T-cell (primary cell): ENCODE measurements at regions of chr12 and their contacts with region 1.

Region 1: GRCh38 chr12:52069327-52070184 is at the start of gene ATG101:
- DNase-seq: peak; percentile 76 to 93 (median 81)
- ATAC-seq: peak; percentile 92 to 97 (median 96)
- H3K4me3 ChIP-seq: peak within 1 kb of the TSS; percentile 93 to 99
- H3K4me3 Mint-ChIP-seq: peak within 1 kb of the TSS; percentile 91 to 98 (median 98)
- H3K27ac ChIP-seq: peak within 1 kb of the TSS; percentile 91
- H3K27ac Mint-ChIP-seq: peak within 1 kb of the TSS; percentile 98 to 99
- H3K4me1 ChIP-seq: peaks cover 20 to 38% of the 10 kb centered on the region in 2 experiments
- H3K4me1 Mint-ChIP-seq: peaks cover 42 to 47% (median 46%) of the 10 kb centered on the region in 3 donors
- H3K27me3 ChIP-seq: no peaks in the 10 kb centered on the region
- H3K27me3 Mint-ChIP-seq: peaks cover 0 to 7% of the 10 kb centered on the region in 2 donors
- total RNA-seq, gene ATG101: 24.8 to 30.3 (median 25.9) TPM

Region 2: GRCh38 chr12:51622564-51622963 is 447.0 kb before region 1 on chr12:
- CTCF ChIA-PET with region 1: no interaction called
- POLR2A ChIA-PET with region 1: no interaction called
- DNase-seq: no peak
- ATAC-seq: no peak
- H3K4me3 ChIP-seq: no peak overlapping the region
- H3K4me3 Mint-ChIP-seq: no peak overlapping the region
- H3K27ac ChIP-seq: no peak overlapping the region
- H3K27ac Mint-ChIP-seq: no peak overlapping the region
- H3K4me1 ChIP-seq: no peaks in the 10 kb centered on the region
- H3K4me1 Mint-ChIP-seq: no peaks in the 10 kb centered on the region
- H3K27me3 ChIP-seq: peaks cover 0 to 2% of the 10 kb centered on the region in 2 experiments
- H3K27me3 Mint-ChIP-seq: peaks cover 12 to 19% of the 10 kb centered on the region in 2 donors

Region 3: GRCh38 chr12:52082988-52083637 is 13.6 kb after region 1 on chr12:
- CTCF ChIA-PET with region 1: interaction called, 4 to 13 read pairs
- POLR2A ChIA-PET with region 1: no interaction called
- DNase-seq: peak; percentile 31 to 82 (median 56)
- ATAC-seq: peak; percentile 74 to 79 (median 76)
- H3K4me3 ChIP-seq: no peak overlapping the region
- H3K4me3 Mint-ChIP-seq: no peak overlapping the region
- H3K27ac ChIP-seq: no peak overlapping the region
- H3K27ac Mint-ChIP-seq: peak overlapping the region in 1 of 2 donors; percentile 30
- H3K4me1 ChIP-seq: peaks cover 6 to 28% of the 10 kb centered on the region in 2 experiments
- H3K4me1 Mint-ChIP-seq: peaks cover 12 to 15% (median 13%) of the 10 kb centered on the region in 3 donors
- H3K27me3 ChIP-seq: peaks cover 0 to 21% of the 10 kb centered on the region in 2 experiments
- H3K27me3 Mint-ChIP-seq: peaks cover 11 to 16% of the 10 kb centered on the region in 2 donors

Region 4: DNA sequence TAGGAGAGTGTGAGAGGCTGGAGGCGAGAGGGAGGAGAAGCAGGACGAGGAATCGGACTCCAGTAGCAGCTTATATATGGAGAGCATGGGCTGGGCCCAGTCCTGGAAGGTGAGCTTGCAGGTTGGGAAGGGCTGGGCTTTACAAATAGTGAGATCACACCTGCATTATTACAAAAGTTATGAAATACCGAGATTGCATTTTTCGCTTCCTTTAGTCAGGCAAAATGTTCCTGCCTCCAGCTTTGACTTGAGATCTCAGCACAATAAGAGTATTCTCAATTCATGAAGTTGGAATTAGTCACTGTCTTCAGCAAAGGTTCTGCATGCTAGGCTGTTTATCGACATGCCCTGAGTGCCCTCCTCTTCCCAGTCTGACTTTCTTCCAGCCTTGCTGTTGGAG is 382.5 kb after region 1 on chr12 and contains the start of gene KRT6B:
- CTCF ChIA-PET with region 1: no interaction called
- POLR2A ChIA-PET with region 1: no interaction called
- DNase-seq: no peak
- ATAC-seq: no peak
- H3K4me3 ChIP-seq: no peak within 1 kb of the TSS
- H3K4me3 Mint-ChIP-seq: no peak within 1 kb of the TSS
- H3K27ac ChIP-seq: no peak within 1 kb of the TSS
- H3K27ac Mint-ChIP-seq: no peak within 1 kb of the TSS
- H3K4me1 ChIP-seq: peaks cover 0 to 4% of the 10 kb centered on the region in 2 experiments
- H3K4me1 Mint-ChIP-seq: peaks cover 0 to 14% (median 7%) of the 10 kb centered on the region in 3 donors
- H3K27me3 ChIP-seq: peaks cover 0 to 3% of the 10 kb centered on the region in 2 experiments
- H3K27me3 Mint-ChIP-seq: peaks cover 1 to 7% of the 10 kb centered on the region in 2 donors
- total RNA-seq, gene KRT6B: not detected

Region 5: GRCh38 chr12:53854701-53855316 is 1785.3 kb after region 1 on chr12:
- CTCF ChIA-PET with region 1: interaction called in 1 of 2 experiments, 18 read pairs
- POLR2A ChIA-PET with region 1: no interaction called
- DNase-seq: no peak
- ATAC-seq: no peak
- H3K4me3 ChIP-seq: no peak overlapping the region
- H3K4me3 Mint-ChIP-seq: no peak overlapping the region
- H3K27ac ChIP-seq: no peak overlapping the region
- H3K27ac Mint-ChIP-seq: no peak overlapping the region
- H3K4me1 ChIP-seq: no peaks in the 10 kb centered on the region
- H3K4me1 Mint-ChIP-seq: no peaks in the 10 kb centered on the region
- H3K27me3 ChIP-seq: peaks cover 4 to 12% of the 10 kb centered on the region in 2 experiments
- H3K27me3 Mint-ChIP-seq: peaks cover 32 to 45% of the 10 kb centered on the region in 2 donors